Mammary epithelial cell (primary cell): ENCODE measurements at regions of chr1 and their contacts with region 1.

Region 1: DNA sequence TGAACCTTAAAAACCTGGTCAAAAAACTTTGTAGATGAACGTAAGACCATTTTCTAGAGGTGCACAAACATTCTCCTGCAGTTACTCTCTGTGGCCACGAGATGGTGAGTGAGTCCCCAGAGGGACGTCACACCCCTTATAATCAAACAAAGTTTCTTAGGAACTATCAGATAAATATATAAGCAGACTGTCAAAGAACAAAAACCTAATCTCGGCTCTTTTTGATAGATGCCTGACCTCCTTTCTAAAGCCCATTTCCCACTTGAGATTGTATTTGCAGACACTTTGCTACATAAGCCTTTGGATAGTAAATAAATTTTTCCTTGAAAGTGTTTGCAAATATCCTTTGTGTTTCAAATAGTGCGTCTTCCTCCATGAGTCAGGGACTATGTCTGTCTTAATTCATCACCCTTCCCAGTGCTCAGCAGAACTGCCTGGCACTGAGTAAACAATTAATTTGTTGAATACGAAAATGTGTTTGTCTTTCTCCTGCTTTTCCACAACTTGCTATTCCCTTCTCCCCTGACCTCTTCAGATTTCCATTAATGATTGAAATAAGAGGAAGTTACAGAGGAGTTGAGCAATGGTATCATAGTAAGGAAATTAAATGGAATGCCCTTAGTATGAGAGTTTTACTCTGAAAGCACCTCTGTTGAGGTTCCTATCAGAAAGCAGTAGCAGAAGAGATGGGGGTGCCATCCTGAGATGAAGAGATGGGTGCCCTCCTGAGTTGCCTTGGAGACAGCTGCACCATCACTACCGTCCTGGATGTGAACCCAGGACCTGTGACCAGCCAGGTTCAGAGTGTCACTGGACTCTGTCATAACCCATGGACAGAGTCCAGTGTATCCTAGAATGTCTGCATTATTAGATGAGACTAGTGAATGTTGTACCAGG is 57.8 kb upstream of the RAVER2 start:
- DNase-seq: peak; percentile 21
- H3K4me3 ChIP-seq: no peak overlapping the region
- H3K27ac ChIP-seq: peak overlapping the region; percentile 3
- H3K4me1 ChIP-seq: peaks cover 14% of the 10 kb centered on the region
- H3K27me3 ChIP-seq: no peaks in the 10 kb centered on the region
- CTCF ChIP-seq: peak; percentile 86 to 88

Region 2: DNA sequence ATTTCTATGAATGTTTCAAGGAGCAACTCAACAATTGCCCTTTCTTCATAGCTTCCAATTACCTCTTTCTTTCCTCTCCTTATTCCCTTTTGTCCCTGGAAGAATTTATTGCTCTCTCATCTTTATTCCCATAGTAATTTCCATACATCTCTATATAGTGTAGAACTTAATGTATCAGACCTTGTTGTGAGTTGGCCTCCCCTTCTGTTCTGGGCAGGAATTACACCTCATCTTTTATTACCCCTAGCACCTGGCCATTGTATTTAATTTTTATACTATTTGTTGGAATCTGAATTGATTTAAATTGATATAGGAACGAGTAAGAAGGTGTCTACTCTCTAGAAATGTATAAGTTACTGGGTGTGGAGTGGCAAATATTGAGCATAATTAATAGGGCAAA is 102.6 kb before region 1 on chr1:
- CTCF ChIA-PET with region 1: no interaction called
- dilution Hi-C with region 1: no loop called
- in situ Hi-C with region 1: no loop called
- intact Hi-C with region 1: no loop called
- DNase-seq: no peak
- H3K4me3 ChIP-seq: no peak overlapping the region
- H3K27ac ChIP-seq: no peak overlapping the region
- H3K4me1 ChIP-seq: no peaks in the 10 kb centered on the region
- H3K27me3 ChIP-seq: no peaks in the 10 kb centered on the region
- CTCF ChIP-seq: peak; percentile 53 to 75

Region 3: GRCh38 chr1:64733581-64734286 is 46.7 kb after region 1 on chr1:
- CTCF ChIA-PET with region 1: interaction called, 28 read pairs
- dilution Hi-C with region 1: no loop called
- in situ Hi-C with region 1: no loop called
- intact Hi-C with region 1: no loop called
- DNase-seq: no peak
- H3K4me3 ChIP-seq: no peak overlapping the region
- H3K27ac ChIP-seq: no peak overlapping the region
- H3K4me1 ChIP-seq: no peaks in the 10 kb centered on the region
- H3K27me3 ChIP-seq: no peaks in the 10 kb centered on the region
- CTCF ChIP-seq: no peak

Region 4: GRCh38 chr1:64823691-64824476 is 136.8 kb after region 1 on chr1:
- CTCF ChIA-PET with region 1: interaction called, 3 read pairs
- dilution Hi-C with region 1: no loop called
- in situ Hi-C with region 1: no loop called
- intact Hi-C with region 1: loop called (anchors 1 kb)
- DNase-seq: peak; percentile 59
- H3K4me3 ChIP-seq: no peak overlapping the region
- H3K27ac ChIP-seq: no peak overlapping the region
- H3K4me1 ChIP-seq: no peaks in the 10 kb centered on the region
- H3K27me3 ChIP-seq: no peaks in the 10 kb centered on the region
- CTCF ChIP-seq: peak; percentile 66 to 83